Uterus (tissue), 4 donors: ENCODE measurements at regions of chr11 and their contacts with region 1.

Region 1: DNA sequence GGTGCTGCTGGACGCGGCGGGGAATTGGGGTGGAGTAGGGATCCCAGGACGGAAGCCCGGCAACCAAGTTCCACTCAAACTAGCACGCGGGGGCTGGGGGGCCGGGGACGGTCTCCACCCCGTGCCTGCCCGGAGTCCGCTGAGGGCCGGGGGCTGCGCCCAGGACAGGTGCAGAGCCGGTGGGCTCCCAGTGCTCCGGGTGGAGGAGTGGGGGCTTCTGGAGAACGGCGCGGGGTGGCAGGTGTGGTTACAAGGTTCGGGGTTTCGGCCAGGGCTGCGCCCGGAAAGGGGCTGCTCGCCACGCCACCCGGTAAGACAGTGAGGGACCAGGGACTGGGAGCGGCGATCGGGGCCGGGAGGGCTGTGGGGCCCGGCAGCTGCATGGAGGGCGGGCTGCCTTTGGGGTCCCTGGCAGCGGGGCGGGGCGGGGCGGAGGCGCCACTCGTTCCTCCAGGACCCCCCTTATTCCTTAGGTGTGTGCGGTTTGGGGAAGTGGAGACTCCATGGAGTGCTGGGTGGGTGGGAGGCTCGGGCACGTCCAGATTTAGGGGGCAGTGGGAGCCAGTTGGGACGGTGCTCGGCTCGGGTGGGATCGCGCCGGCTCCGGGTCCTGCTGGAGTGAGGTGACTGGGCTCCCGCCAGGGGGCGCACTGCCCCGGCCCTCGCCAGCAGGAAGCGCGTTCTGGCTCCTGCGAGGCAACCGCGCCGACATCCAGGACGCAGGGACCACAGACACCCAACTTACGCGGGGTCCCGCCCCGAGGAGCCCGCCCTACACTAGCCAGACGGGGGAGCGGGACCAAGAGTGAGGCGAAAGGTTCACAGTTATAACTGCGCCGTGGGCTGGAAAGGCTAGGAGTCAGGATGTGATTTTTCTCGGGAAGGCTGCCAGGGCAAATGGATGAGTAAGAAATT is 868 bp downstream of the TSPAN18 start:
- DNase-seq: peak; percentile 80 to 86
- H3K4me3 ChIP-seq: peak overlapping the region; percentile 58 to 92
- H3K27ac ChIP-seq: peak overlapping the region; percentile 89 to 91
- H3K4me1 ChIP-seq: peaks cover 0 to 3% of the 10 kb centered on the region in 2 donors
- H3K27me3 ChIP-seq: no peaks in the 10 kb centered on the region
- CTCF ChIP-seq: peak; percentile 83 to 96 (median 94)
- POLR2A ChIP-seq: peak in 1 of 2 donors; percentile 14

Region 2: DNA sequence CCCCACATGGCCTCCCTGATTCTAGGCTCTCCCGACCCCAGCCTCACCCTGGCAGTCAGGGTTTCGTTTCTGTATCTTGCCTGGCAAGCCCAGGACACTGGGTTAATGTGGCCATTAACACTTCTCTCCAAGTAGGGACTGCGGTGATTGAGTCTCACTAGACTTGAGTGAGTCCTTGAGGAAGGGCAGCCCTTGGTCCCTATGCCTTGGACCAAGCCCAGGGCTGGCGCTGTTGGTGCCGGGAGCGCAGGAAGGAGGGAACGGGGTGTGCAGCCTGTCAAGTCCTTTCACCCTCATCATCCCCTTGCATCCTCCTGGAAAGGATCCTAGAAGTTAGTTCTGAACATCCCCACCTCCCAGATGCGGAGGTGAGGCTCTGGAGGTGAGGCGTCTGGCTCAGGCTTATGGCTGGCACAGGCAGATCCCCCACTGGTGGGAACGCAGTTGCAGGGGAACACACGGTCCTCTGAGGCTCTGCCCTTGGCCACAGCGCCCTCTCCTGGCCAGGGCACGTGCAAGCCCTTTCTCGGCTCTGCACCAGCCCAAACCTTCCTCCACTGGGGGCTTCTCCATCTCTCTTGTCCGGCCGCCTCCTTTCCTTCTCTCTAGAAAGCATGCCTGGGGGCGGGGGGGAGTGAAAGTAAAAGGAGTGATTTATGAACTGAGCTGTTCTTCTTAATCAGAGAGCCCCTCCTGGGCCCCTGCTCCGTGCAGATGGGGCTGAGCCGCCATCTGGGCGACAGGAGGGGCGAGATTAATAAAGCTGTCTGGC is 166.4 kb after region 1 on chr11:
- intact Hi-C with region 1: loop called (anchors 5 kb)
- DNase-seq: peak; percentile 77 to 83
- H3K4me3 ChIP-seq: no peak overlapping the region
- H3K27ac ChIP-seq: peak overlapping the region; percentile 81 to 84
- H3K4me1 ChIP-seq: no peaks in the 10 kb centered on the region
- H3K27me3 ChIP-seq: no peaks in the 10 kb centered on the region
- CTCF ChIP-seq: peak; percentile 91 to 97 (median 92)
- POLR2A ChIP-seq: no peak